Head of caudate nucleus (tissue), 42 donors: ENCODE measurements at regions of chr22 and their contacts with region 1.

Region 1: DNA sequence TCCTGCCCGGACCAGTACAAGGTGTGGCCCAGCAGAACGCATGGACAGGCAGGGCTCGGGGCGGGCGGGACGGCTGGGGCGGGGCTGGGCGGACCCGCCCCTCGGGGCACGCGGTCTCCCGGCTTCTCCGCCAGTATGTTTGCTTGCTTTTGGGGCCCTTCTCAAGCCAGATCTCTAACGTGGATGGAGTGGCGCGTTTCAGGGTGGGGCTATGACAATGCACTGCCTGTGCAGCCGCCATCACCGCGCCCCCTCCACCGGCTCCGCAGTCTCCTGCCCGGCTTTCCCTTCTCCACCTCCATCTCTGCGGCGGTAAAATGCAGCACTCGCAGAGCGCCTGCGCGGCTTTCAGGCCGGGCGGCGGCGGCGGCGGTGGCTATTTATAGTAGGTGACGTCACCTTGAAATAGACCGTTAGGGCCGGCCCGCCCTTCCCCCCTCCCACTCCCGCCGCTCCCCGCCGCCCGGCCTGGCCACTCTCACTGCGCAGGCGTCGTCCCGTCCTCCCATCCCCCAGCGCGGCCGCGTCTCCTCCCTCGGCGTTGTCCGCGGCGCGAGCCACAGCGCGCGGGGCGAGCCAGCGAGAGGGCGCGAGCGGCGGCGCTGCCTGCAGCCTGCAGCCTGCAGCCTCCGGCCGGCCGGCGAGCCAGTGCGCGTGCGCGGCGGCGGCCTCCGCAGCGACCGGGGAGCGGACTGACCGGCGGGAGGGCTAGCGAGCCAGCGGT is at the start of gene YWHAH:
- DNase-seq: peak; percentile 83 to 98 (median 94)

Region 2: DNA sequence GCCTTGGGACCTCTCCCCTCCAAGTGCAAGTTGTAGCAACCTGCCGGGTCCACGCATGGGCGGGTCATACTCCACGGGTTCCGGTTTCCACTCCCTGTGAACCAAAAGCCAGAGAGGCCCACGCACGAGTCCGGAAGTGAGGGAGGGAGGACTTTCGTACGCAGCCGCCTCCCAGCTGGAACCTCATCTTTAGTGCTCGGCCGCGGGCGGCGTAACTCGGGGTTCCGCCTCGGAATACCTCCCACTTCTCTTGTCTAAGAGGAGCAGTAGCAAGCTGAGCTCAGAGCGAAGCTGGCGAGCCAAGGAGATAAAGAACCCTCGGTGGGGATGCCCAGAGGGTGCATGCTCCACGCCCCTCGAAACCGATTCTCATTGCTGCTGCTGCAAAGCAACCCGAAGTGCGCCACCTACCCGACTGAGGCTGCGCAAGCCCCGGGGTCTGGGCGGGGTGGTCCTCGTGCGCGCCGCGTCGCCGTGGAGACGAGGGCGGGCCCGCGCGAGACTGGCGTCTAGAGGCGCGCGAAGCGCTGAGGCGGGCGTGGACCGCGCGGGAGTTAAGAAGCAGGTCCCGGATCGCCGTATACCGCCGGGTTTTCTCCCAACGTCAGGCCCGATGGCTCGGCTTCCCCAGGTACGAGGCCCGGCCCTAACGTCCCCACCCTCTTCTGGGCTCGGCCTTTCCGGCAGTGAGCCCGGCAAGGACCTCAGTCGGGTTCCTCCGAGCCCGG is 448.0 kb before region 1 on chr22 and contains the start of gene SFI1:
- intact Hi-C with region 1: loop called (anchors 10 kb)
- DNase-seq: peak; percentile 87 to 98 (median 95)

Region 3: DNA sequence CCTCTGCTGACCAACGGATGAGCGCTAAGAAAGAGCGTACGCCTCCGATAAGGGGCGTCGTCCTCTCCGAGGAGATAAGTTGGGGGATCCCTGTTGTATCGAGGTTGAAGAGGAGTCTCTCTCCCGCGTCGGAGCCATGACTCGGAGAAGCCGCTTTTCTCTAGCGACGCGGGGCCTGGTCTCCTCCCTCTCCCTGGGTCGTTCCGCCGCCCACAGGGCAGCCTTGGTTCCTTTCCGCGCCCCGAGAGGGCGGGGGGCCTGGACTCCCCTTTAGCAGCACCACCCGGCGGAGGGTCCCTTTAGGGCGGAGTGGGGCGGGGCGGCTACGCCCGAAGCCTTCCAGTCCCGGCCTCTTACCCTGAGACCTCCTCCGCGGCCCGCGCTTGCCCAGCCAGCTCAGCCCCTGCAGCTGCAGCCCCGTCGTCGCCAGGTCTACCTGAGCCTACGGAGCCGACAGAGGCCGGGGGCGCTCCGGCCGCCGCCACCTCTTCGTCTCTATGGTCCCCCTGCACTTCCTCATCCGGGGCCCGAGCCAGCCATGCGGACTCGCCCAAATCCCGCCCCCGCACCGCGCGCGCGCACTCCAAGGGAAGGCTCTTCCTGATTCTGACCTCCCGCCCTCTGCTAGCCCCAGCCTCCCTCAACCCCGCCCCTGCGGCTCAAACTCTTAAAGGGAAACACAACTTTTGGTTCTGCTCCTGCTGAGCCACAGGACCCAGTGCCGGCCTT is 194.3 kb before region 1 on chr22 and contains the start of gene PRR14L:
- intact Hi-C with region 1: loop called (anchors 10 kb)
- DNase-seq: peak; percentile 96 to 100 (median 99)

Region 4: DNA sequence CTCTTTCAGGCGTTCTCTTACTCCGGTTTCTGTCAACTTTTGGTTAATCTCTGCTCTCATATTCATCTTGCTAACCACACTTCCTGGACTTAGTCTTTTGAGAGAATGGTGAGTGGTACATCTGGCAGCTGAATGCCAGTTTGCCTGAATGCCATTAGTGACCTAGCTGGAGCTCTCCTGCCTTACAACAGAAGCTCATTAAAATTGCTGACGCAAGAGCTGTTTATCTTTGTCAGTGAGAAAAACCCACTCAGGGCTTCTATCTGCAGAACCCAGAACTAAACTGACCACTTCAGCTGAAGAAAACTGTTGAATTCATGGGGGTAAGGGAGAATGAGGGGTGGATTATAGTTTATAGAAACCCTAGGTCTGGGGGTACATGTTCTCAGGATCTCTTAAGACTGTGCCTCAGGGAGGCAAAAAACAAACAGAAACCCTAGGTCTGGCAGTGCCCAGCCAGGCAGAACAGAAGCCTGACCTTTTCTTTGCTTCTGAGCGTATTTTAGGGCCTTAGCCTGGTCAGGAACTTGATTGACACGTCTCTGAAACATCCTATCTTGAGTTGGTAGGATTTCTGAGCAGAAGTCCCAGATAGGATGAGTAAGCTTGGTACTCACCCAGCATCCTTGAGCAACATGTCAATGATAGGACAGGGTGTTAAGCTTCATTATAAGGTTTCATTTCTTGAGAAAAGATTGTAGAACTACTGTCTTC is 52.6 kb before region 1 on chr22:
- intact Hi-C with region 1: loop called (anchors 10 kb)
- DNase-seq: peak in 1 of 42 donors; percentile 20